ENCODE measurements at regions of chr3 and their contacts with region 1.

Region 1: DNA sequence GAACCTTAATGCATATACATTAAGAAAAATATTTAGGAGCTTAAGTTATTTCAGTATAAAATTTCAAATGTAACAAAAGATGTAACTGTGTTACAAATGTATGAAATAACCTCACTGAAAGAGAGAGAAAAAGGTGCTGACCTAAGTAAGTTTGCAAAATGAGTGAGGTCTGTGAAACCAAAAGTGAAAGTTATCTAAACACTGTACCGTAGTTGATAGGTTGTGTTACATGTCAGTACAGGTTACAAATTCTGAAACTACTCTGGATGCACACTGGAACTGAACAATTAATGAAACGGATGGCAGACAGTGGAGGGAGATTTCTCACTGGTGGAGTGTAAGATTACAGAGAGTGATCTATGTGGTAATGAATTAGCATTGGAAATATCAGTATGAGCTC is 420.7 kb downstream of the ZNF385D start:
- DNase-seq: no peak
- H3K4me3 ChIP-seq: no peak overlapping the region
- H3K27me3 ChIP-seq: no peaks in the 10 kb centered on the region
- CTCF ChIP-seq: no peak

Region 2: DNA sequence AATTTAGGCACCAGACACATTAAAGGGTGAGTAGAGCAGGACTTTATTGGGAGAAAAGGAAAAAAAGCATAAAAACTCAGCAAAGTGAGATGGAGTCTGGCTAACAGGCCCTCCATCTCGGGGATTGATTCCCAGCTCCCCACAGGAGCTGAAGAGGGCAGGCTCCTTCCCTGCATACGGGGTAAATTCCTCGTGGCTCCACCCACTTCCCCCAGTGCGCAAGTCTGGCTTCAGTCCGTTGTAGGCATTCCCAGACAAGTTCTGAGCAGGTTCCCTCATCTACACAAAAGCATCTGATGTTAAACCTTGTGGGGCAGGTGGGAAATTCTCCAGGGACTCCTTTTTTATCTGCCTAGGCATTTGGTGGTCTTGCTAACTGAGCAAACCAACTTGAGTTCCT is 301.9 kb before region 1 on chr3:
- CTCF ChIA-PET with region 1: no interaction called
- POLR2A ChIA-PET with region 1: no interaction called
- DNase-seq: no peak
- H3K4me3 ChIP-seq: no peak overlapping the region
- H3K27me3 ChIP-seq: no peaks in the 10 kb centered on the region
- CTCF ChIP-seq: no peak

Region 3: DNA sequence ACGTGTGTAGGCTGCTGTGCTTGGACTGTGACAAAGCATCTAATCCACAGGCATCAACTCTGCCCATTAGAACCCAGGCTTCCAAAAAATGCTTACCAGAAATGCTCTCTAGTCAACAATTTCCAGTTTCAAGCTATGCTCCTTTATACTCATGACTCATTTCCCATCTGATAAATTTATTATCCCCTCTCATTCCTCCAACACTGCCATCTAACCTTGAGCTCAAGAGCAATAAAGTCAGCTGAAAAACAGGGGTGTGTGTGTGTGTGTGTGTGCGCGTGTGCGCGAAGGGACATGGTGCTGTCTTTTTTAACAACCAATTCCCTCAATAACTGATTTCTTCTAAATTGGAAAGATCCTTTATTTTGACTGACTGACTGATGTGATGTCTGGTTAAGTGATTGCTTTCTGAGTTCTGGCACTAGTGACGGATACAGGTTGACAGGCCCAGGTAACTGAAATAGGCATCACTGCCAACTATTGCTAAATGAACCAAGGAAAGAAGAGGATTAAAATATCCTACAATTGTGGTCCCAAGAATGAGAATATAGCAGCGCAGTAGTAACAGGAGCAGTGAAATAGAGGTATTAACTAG is 15.2 kb after region 1 on chr3:
- CTCF ChIA-PET with region 1: no interaction called
- POLR2A ChIA-PET with region 1: no interaction called
- DNase-seq: no peak
- H3K4me3 ChIP-seq: no peak overlapping the region
- H3K27me3 ChIP-seq: no peaks in the 10 kb centered on the region
- CTCF ChIP-seq: no peak

Region 4: DNA sequence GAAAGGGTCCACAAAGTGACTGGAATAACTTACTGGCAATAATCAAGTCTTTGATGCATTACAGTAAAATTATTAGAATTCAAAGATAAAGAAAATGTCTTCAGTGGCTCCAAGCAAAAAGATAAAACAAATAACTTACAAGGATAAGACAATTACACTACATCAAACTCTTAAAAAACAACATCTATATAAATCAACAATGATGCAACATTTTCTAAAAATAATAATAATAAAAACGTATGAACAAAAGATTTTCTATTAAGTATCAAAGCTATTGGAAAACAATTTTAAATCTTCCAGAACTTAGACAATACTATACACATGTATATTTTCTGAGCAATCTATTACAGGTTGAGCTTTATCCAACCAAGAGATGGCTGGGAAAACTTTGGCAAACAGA is 30.9 kb after region 1 on chr3:
- CTCF ChIA-PET with region 1: no interaction called
- POLR2A ChIA-PET with region 1: interaction called, 10 read pairs
- DNase-seq: no peak
- H3K4me3 ChIP-seq: no peak overlapping the region
- H3K27me3 ChIP-seq: no peaks in the 10 kb centered on the region
- CTCF ChIP-seq: no peak

Measured in BJ (cell line).